ENCODE measurements at regions of chrX and their contacts with region 1.

Region 1: DNA sequence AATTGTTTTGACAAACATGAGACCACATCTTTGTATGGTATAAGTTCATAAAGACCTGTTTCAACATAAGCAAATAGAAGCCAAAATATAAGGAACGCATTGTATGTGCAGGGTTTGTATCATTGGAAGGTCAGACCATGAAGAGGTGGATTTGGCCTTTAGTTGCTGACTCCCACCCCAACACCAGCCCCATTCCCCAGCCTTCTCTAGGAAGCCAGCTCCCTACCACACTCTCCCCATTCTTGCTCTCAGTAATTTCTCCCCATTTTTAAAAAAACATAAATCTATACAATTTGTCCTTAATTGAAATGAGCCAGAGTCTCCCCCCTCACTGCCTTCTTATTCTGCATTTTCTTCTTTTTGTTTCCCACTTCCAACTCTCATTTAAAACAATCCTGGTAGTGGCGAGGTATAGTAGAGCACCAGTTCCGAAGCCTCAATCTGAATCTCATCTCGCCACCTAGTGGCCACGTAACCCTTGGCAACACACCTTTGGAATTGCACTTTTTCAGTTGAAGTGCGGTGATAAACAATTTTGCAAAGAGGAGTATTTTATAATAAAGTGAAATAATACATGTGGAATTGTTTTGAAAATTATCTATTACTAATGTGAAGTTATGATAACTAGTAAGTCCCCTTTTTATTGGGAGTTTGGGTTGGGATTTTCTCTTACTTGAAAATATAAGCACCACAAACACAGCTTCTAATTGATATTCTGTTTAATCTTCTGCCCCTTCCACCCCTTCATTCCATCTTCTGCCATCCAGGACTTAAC is 126.6 kb downstream of the ASB9 start:
- DNase-seq: no peak
- H3K4me3 ChIP-seq: no peak overlapping the region
- H3K27ac ChIP-seq: no peak overlapping the region
- H3K4me1 ChIP-seq: no peaks in the 10 kb centered on the region
- H3K27me3 ChIP-seq: no peaks in the 10 kb centered on the region
- CTCF ChIP-seq: peak; percentile 46 to 69 (median 59)
- POLR2A ChIP-seq: no peak

Region 2: DNA sequence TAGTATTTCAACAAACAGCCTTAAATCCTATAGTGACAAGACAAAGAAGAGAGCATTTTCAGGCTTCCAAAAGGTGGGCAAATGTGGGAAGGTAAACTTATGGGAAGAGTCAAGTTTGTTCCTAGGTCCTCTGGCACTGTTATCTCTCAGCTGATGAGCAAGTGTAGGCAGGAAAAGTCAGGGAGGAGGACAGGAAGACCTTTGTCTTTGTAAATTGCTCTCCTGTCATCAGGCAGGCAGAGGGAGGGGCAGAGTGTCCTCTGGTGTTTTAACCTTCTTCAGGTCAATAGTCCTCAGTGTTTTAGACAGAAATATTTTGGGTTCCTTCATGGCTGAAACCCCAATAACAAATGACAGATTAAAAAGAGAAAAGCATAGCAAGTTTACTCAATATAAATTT is 1100.0 kb before region 1 on chrX:
- intact Hi-C with region 1: loop called (anchors 5 kb)
- DNase-seq: no peak
- H3K4me3 ChIP-seq: no peak overlapping the region
- H3K27ac ChIP-seq: no peak overlapping the region
- H3K4me1 ChIP-seq: no peaks in the 10 kb centered on the region
- H3K27me3 ChIP-seq: no peaks in the 10 kb centered on the region
- CTCF ChIP-seq: no peak
- POLR2A ChIP-seq: no peak

Region 3: DNA sequence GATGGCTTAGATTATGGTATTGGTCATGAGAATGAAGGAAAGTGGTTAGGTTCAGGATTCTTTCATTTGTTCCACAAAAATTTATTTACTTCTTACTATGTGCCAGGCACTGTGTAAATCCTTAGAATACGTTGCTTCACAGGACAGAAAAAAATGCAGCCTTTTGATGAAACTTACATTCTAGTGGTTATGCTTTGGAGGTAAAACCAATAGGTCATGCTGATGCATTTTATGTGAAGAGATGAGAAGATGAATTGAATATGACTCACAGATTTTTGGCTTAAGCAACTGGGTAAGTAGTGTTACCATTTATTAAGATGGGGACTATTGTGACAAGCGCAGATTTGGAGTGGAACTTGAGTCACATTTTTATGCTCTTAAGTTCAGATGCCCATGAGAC is 448.6 kb before region 1 on chrX:
- intact Hi-C with region 1: no loop called
- DNase-seq: no peak
- H3K4me3 ChIP-seq: no peak overlapping the region
- H3K27ac ChIP-seq: no peak overlapping the region
- H3K4me1 ChIP-seq: no peaks in the 10 kb centered on the region
- H3K27me3 ChIP-seq: no peaks in the 10 kb centered on the region
- CTCF ChIP-seq: no peak
- POLR2A ChIP-seq: no peak

Region 4: GRCh38 chrX:15930585-15930984 is 787.3 kb after region 1 on chrX:
- intact Hi-C with region 1: no loop called
- DNase-seq: no peak
- H3K4me3 ChIP-seq: no peak overlapping the region
- H3K27ac ChIP-seq: no peak overlapping the region
- H3K4me1 ChIP-seq: no peaks in the 10 kb centered on the region
- H3K27me3 ChIP-seq: peaks cover 0 to 5% (median 0%) of the 10 kb centered on the region in 4 donors
- CTCF ChIP-seq: no peak
- POLR2A ChIP-seq: no peak